ENCODE measurements at regions of chrX and their contacts with region 1.

Region 1: DNA sequence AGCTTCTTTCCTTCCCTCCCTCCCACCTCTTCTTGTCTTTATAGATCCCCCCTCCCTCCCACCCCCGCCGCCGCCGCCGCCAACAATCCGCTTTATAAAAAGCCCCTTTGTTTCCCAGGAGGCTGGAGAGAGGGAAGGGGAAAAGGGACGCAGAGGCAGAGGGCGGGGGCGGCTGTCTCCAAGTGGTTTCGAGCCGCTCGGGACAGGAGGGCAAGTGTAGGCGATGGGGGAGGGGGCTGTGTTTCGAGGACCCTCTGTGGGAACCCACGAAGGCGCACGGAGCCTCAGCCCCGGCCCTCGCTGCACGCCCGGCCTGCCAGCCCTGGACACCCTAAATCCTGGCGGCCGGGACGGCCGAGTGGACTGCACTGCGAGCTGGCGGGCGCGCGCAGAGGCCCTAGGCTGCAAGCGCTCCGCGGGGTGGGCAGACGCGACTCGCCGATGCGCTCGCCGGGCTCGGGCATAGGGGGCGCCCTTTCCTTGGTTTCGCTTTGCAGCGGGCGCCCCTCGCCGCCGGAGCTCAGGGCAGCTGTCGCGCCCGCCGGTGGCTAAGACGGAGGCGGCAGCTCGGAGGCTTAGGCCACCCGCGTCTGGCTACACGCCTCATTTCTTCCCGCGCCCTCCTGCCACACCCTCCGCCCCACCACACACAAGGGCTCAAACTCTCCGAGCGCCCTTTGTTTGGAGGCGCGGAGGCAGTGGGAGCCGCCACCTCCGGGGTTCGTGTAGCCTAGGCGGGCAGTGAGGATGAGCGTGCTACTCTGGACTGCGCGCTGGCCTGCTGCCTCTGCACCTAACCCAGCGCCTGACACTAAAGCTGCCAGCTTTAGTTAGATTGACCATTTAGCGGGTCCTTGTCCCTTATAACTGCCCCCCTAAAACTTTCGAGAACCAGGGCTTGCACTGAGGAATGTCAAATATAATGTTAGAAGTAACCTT is 2.2 kb downstream of the MAMLD1 start:
- DNase-seq: peak; percentile 53 to 60 (median 55)
- H3K4me3 ChIP-seq: peak overlapping the region in 1 of 2 donors; percentile 57
- H3K4me3 Mint-ChIP-seq: peak overlapping the region; percentile 84 to 93 (median 88)
- H3K27ac ChIP-seq: peak overlapping the region; percentile 31
- H3K27ac Mint-ChIP-seq: peak overlapping the region in 6 of 7 donors; percentile 29 to 85 (median 81)
- H3K4me1 ChIP-seq: peaks cover 5% of the 10 kb centered on the region
- H3K4me1 Mint-ChIP-seq: peaks cover 12 to 23% (median 19%) of the 10 kb centered on the region in 4 donors
- H3K27me3 ChIP-seq: no peaks in the 10 kb centered on the region
- H3K27me3 Mint-ChIP-seq: no peaks in the 10 kb centered on the region

Region 2: GRCh38 chrX:150478496-150479492 is 113.5 kb after region 1 on chrX:
- CTCF ChIA-PET with region 1: interaction called, 15 read pairs
- POLR2A ChIA-PET with region 1: interaction called, 5 read pairs
- intact Hi-C with region 1: loop called (anchors 2 kb)
- DNase-seq: peak; percentile 18 to 43 (median 21)
- H3K4me3 ChIP-seq: peak overlapping the region in 1 of 2 donors; percentile 11
- H3K4me3 Mint-ChIP-seq: peak overlapping the region; percentile 73 to 89 (median 82)
- H3K27ac ChIP-seq: peak overlapping the region; percentile 46
- H3K27ac Mint-ChIP-seq: peak overlapping the region; percentile 85 to 96 (median 92)
- H3K4me1 ChIP-seq: peaks cover 45% of the 10 kb centered on the region
- H3K4me1 Mint-ChIP-seq: peaks cover 23 to 60% (median 34%) of the 10 kb centered on the region in 4 donors
- H3K27me3 ChIP-seq: no peaks in the 10 kb centered on the region
- H3K27me3 Mint-ChIP-seq: no peaks in the 10 kb centered on the region

Region 3: DNA sequence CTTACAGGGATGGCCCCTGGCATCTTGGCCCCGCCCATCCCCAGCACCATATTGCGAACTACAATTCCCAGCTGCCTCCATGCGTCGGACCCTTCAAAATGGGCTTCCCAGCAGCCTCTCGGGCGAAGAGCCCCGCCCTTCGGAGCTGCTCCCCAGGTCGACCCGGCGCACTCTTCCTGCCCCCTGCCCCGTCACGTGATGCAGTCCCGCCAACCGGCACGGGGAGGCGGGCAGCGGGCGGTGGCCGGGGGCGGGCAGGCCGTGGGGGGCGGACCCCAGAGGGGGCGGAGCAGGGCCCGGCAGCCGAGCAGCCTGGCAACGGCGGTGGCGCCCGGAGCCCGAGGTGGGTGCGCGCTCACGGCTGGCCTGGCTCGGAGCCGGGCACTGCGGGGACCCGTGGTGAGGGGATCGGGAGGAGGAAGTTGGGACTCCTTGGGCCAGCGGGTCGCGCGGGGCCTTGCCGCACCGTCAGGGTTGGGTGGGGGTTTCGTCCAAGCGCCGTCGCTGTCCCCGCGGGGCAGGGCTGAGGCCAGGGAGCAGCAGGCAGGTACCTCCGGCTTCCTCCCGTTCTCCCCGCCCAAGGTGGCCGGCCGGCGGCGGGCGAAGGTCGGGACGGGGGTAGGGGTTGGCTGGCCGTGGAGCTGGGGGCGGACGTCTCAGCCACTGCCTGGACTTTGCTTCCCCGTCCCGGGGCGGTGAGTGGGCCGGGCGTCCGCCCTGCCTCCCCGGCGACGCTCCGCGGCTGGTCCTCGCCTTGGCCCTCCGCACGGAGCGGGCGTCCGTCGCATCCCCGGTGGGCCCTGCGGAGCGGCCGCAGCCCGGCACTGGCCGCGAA is 203.2 kb after region 1 on chrX and contains the start of gene MTM1:
- CTCF ChIA-PET with region 1: interaction called, 3 read pairs
- POLR2A ChIA-PET with region 1: interaction called, 23 read pairs
- intact Hi-C with region 1: loop called (anchors 5 kb)
- DNase-seq: peak; percentile 90 to 92 (median 92)
- H3K4me3 ChIP-seq: peak within 1 kb of the TSS; percentile 31 to 64
- H3K4me3 Mint-ChIP-seq: peak within 1 kb of the TSS; percentile 85 to 90 (median 88)
- H3K27ac ChIP-seq: peak within 1 kb of the TSS; percentile 78
- H3K27ac Mint-ChIP-seq: peak within 1 kb of the TSS; percentile 82 to 100 (median 87)
- H3K4me1 ChIP-seq: peaks cover 41% of the 10 kb centered on the region
- H3K4me1 Mint-ChIP-seq: peaks cover 26 to 49% (median 36%) of the 10 kb centered on the region in 4 donors
- H3K27me3 ChIP-seq: no peaks in the 10 kb centered on the region
- H3K27me3 Mint-ChIP-seq: no peaks in the 10 kb centered on the region
- total RNA-seq, gene MTM1: 37.7 to 38.5 TPM

Region 4: GRCh38 chrX:150587585-150588503 is 222.5 kb after region 1 on chrX:
- CTCF ChIA-PET with region 1: interaction called, 4 read pairs
- POLR2A ChIA-PET with region 1: no interaction called
- intact Hi-C with region 1: loop called (anchors 5 kb)
- DNase-seq: peak in 4 of 5 donors; percentile 25 to 40 (median 32)
- H3K4me3 ChIP-seq: no peak overlapping the region
- H3K4me3 Mint-ChIP-seq: no peak overlapping the region
- H3K27ac ChIP-seq: no peak overlapping the region
- H3K27ac Mint-ChIP-seq: peak overlapping the region in 2 of 7 donors; percentile 17 to 71
- H3K4me1 ChIP-seq: peaks cover 4% of the 10 kb centered on the region
- H3K4me1 Mint-ChIP-seq: peaks cover 10 to 35% (median 29%) of the 10 kb centered on the region in 4 donors
- H3K27me3 ChIP-seq: no peaks in the 10 kb centered on the region
- H3K27me3 Mint-ChIP-seq: no peaks in the 10 kb centered on the region

Region 5: DNA sequence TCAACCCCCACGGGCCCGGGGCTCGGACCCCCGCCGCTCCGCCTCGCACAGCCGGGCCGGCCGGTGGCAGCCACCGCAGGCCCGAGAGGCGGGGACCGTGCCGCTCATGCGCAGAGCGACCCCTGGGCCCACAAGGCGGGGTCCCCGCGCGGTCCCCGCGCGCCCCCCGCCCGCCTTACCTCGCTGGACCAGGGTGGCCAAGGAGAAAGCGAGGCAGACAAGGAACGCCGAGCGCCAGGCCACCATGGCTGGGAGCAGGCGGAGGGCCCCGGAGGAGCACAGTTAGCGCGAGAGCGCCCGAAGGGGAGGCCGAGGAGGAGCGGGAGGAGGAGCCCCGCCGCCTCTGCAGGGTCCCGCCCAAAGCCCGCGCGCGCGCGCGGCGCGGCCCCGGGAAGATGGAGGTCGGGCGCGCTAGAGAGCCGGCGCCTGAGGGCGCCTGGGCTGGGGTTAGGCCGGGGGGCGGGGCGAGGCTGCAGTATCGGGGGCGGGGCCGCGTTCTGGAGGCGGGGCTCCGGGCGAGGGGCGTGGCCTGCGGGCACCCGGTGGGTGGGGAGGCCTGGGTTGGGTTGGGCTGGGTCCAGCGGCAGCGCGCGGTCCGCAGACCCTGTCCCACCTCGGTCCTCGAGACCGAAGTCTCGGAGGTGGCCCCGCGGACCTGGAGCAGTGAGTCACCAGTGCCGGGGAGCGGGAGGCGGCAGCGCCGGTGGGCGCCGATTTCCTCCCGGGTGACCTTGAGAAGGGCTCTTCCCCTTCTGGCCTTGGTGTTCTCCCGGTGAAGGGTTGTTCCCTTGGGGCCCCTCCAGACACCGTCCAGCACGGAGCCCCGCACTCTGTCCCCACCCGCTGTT is 533.2 kb after region 1 on chrX and contains the start of gene CD99L2:
- CTCF ChIA-PET with region 1: no interaction called
- POLR2A ChIA-PET with region 1: no interaction called
- intact Hi-C with region 1: loop called (anchors 2 kb)
- DNase-seq: peak; percentile 85 to 86 (median 86)
- H3K4me3 ChIP-seq: peak within 1 kb of the TSS; percentile 47 to 56
- H3K4me3 Mint-ChIP-seq: peak within 1 kb of the TSS; percentile 87 to 95 (median 91)
- H3K27ac ChIP-seq: peak within 1 kb of the TSS; percentile 66
- H3K27ac Mint-ChIP-seq: peak within 1 kb of the TSS; percentile 53 to 94 (median 84)
- H3K4me1 ChIP-seq: peaks cover 9% of the 10 kb centered on the region
- H3K4me1 Mint-ChIP-seq: peaks cover 3 to 16% (median 5%) of the 10 kb centered on the region in 4 donors
- H3K27me3 ChIP-seq: no peaks in the 10 kb centered on the region
- H3K27me3 Mint-ChIP-seq: no peaks in the 10 kb centered on the region
- total RNA-seq, gene CD99L2: 15.5 to 17.3 TPM

Measured in CD4-positive, alpha-beta memory T cell (primary cell).